Activated T-helper 1 cell treated with anti-CD3 and anti-CD28 coated beads, Interleukin-12 subunit alpha, Interleukin-12 subunit beta, Interleukin-2, Interleukin-4 antibody, amounts not matched to agents 30 ng/mL and 10 ng/mL and 1 ng/mL, durations not matched to agents 14 hours and 24 hours and 36 hours (primary cell): ENCODE measurements at regions of chr4 and their contacts with region 1.

Region 1: DNA sequence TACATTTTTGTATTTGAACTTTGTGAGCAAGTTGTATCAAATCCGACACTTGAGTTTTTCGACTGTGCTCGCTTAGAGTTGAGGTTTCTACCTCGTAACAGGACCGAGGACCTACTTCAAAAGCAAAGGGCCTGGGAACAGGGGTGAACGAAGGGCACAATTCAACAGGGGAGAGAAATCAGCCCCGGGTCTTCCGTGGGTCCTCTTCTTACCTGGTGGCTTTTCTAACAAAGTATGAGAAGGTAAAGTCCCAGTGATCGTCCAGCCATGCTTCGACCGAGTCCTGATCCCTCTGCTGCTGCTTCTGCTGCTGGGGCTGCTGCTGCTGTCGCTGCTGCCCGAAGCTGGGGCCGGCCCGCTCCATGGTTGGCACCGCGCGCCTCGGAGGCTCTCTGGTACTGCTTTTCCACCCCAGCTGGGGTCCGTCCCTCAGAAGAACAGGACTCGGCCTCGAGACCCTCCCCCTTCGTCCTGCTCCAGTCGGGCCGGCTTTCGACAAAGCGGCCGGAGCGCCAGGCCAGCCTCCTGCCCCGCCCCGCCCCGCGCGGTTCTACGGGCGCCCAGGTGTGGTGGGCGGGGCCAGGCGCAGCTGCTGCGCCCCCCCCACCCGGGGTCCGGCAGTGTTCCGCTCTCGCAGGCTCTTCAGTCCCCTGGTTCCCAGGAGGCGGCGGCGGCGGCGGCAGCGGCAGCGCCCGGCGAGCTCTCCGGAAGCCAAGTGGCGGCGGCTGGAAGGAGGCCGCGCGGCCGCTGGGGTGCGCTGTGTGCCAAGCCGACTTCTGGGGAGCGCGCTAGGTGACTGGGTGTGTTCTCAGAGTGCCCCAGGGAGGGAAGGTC is at the start of gene PDE5A:
- DNase-seq: peak; percentile 67
- H3K4me3 Mint-ChIP-seq: peak within 1 kb of the TSS; percentile 86
- H3K27ac Mint-ChIP-seq: no peak within 1 kb of the TSS
- H3K4me1 Mint-ChIP-seq: peaks cover 23% of the 10 kb centered on the region
- H3K27me3 Mint-ChIP-seq: peaks cover 50% of the 10 kb centered on the region
- total RNA-seq, gene PDE5A: 0.10 TPM in 1 of 2 replicates, not detected in the other

Region 2: GRCh38 chr4:118981839-118982381 is 646.6 kb before region 1 on chr4:
- intact Hi-C with region 1: loop called (anchors 1 kb)
- DNase-seq: peak; percentile 20
- H3K4me3 Mint-ChIP-seq: no peak overlapping the region
- H3K27ac Mint-ChIP-seq: no peak overlapping the region
- H3K4me1 Mint-ChIP-seq: no peaks in the 10 kb centered on the region
- H3K27me3 Mint-ChIP-seq: peaks cover 4% of the 10 kb centered on the region

Region 3: GRCh38 chr4:119314356-119314755 is 314.2 kb before region 1 on chr4:
- intact Hi-C with region 1: loop called (anchors 1 kb)
- DNase-seq: peak; percentile 10
- H3K4me3 Mint-ChIP-seq: no peak overlapping the region
- H3K27ac Mint-ChIP-seq: no peak overlapping the region
- H3K4me1 Mint-ChIP-seq: no peaks in the 10 kb centered on the region
- H3K27me3 Mint-ChIP-seq: peaks cover 12% of the 10 kb centered on the region

Region 4: GRCh38 chr4:119559044-119559647 is 69.4 kb before region 1 on chr4:
- intact Hi-C with region 1: loop called (anchors 1 kb)
- DNase-seq: no peak
- H3K4me3 Mint-ChIP-seq: no peak overlapping the region
- H3K27ac Mint-ChIP-seq: no peak overlapping the region
- H3K4me1 Mint-ChIP-seq: no peaks in the 10 kb centered on the region
- H3K27me3 Mint-ChIP-seq: no peaks in the 10 kb centered on the region

Region 5: GRCh38 chr4:119580303-119580702 is 48.2 kb before region 1 on chr4:
- intact Hi-C with region 1: no loop called
- DNase-seq: no peak
- H3K4me3 Mint-ChIP-seq: no peak overlapping the region
- H3K27ac Mint-ChIP-seq: no peak overlapping the region
- H3K4me1 Mint-ChIP-seq: no peaks in the 10 kb centered on the region
- H3K27me3 Mint-ChIP-seq: peaks cover 5% of the 10 kb centered on the region

Region 6: GRCh38 chr4:120049732-120050494 is 421.4 kb after region 1 on chr4:
- intact Hi-C with region 1: loop called (anchors 1 kb)
- DNase-seq: peak; percentile 53
- H3K4me3 Mint-ChIP-seq: no peak overlapping the region
- H3K27ac Mint-ChIP-seq: no peak overlapping the region
- H3K4me1 Mint-ChIP-seq: peaks cover 5% of the 10 kb centered on the region
- H3K27me3 Mint-ChIP-seq: no peaks in the 10 kb centered on the region